CD4-positive, alpha-beta T cell (primary cell): ENCODE measurements at regions of chr13 and their contacts with region 1.

Region 1: GRCh38 chr13:41263261-41264027 is at the start of gene MTRF1:
- DNase-seq: peak; percentile 62 to 91 (median 76)
- ATAC-seq: peak; percentile 92
- H3K4me3 ChIP-seq: peak within 1 kb of the TSS; percentile 68
- H3K4me3 Mint-ChIP-seq: peak within 1 kb of the TSS; percentile 99
- H3K27ac ChIP-seq: peak within 1 kb of the TSS; percentile 77 to 78
- H3K27ac Mint-ChIP-seq: peak within 1 kb of the TSS; percentile 96
- H3K4me1 ChIP-seq: peaks cover 13% of the 10 kb centered on the region
- H3K4me1 Mint-ChIP-seq: peaks cover 35% of the 10 kb centered on the region
- H3K27me3 ChIP-seq: no peaks in the 10 kb centered on the region
- H3K27me3 Mint-ChIP-seq: no peaks in the 10 kb centered on the region
- CTCF ChIP-seq: no peak
- total RNA-seq, gene MTRF1: 15.7 to 17.8 TPM

Region 2: DNA sequence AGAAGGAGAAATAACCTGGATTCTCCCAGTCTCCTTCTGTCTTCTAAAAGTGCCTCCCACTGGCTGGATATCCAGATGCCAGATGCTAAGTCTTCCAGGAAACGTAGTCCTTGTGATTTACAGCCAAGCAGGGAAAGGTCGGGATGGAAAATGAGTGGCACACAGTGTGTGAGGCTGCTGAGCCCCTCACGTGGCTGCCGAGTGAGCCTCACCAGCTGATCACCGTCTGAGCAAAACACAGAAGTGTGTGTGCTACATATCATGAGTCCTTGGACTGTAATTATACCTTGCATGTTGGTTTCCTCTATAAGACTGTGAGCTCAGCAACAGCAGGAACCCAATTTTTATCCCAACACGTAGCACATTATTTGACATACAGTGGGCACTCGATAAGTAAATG is 1675.5 kb before region 1 on chr13:
- CTCF ChIA-PET with region 1: no interaction called
- POLR2A ChIA-PET with region 1: no interaction called
- intact Hi-C with region 1: no loop called
- DNase-seq: no peak
- ATAC-seq: no peak
- H3K4me3 ChIP-seq: no peak overlapping the region
- H3K4me3 Mint-ChIP-seq: no peak overlapping the region
- H3K27ac ChIP-seq: no peak overlapping the region
- H3K27ac Mint-ChIP-seq: no peak overlapping the region
- H3K4me1 ChIP-seq: no peaks in the 10 kb centered on the region
- H3K4me1 Mint-ChIP-seq: no peaks in the 10 kb centered on the region
- H3K27me3 ChIP-seq: peaks cover 0 to 4% of the 10 kb centered on the region in 2 experiments
- H3K27me3 Mint-ChIP-seq: peaks cover 24% of the 10 kb centered on the region
- CTCF ChIP-seq: no peak

Region 3: DNA sequence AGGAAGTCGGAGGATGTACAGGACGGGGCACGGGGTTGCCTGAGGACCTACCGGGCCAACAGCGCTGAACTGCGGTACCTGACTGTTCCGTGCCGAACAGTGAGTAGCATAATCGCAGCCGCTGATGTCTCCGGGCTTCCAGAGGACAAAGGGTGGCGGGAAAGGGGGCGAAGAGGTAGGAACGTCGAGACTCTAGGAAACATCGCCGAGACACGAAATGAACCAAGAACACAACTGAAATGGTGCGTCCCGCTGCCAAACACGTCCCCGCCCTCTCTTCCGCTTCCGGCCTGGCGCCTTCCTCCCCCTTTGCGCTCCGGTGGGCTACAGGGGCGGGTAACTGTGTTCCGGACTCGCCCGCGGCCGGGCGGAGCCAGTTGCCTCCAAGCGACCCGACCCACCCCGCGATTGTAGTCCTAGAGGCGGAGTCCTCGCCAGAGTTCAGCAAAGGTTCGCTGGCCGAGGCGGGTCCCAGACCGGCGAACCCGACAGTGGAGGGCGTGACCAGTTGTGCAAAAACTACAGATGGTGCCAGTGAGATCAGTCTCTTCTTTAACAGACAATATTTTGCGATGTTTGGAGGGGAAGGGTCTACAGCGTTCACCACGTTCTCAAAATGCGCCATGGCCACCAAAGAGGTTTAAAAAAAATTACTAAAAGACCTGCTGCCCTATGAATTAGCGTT is 492.4 kb before region 1 on chr13 and contains the start of gene MRPS31:
- CTCF ChIA-PET with region 1: no interaction called
- POLR2A ChIA-PET with region 1: no interaction called
- intact Hi-C with region 1: loop called in 1 of 2 experiments (anchors 10 kb)
- DNase-seq: peak; percentile 87 to 96 (median 94)
- ATAC-seq: peak; percentile 92
- H3K4me3 ChIP-seq: peak within 1 kb of the TSS; percentile 90
- H3K4me3 Mint-ChIP-seq: peak within 1 kb of the TSS; percentile 98
- H3K27ac ChIP-seq: peak within 1 kb of the TSS; percentile 75 to 81
- H3K27ac Mint-ChIP-seq: peak within 1 kb of the TSS; percentile 95
- H3K4me1 ChIP-seq: peaks cover 26% of the 10 kb centered on the region
- H3K4me1 Mint-ChIP-seq: peaks cover 29% of the 10 kb centered on the region
- H3K27me3 ChIP-seq: no peaks in the 10 kb centered on the region
- H3K27me3 Mint-ChIP-seq: no peaks in the 10 kb centered on the region
- CTCF ChIP-seq: peak; percentile 16
- total RNA-seq, gene MRPS31: 8.3 to 9.5 TPM

Region 4: GRCh38 chr13:41132512-41133152 is 130.8 kb before region 1 on chr13 and contains the start of gene KBTBD6:
- CTCF ChIA-PET with region 1: no interaction called
- POLR2A ChIA-PET with region 1: no interaction called
- intact Hi-C with region 1: loop called in 1 of 2 experiments (anchors 1 kb)
- DNase-seq: peak; percentile 81 to 96 (median 88)
- ATAC-seq: peak; percentile 96
- H3K4me3 ChIP-seq: peak within 1 kb of the TSS; percentile 91
- H3K4me3 Mint-ChIP-seq: peak within 1 kb of the TSS; percentile 96
- H3K27ac ChIP-seq: peak within 1 kb of the TSS; percentile 50 to 68
- H3K27ac Mint-ChIP-seq: peak within 1 kb of the TSS; percentile 86
- H3K4me1 ChIP-seq: peaks cover 37% of the 10 kb centered on the region
- H3K4me1 Mint-ChIP-seq: peaks cover 54% of the 10 kb centered on the region
- H3K27me3 ChIP-seq: no peaks in the 10 kb centered on the region
- H3K27me3 Mint-ChIP-seq: no peaks in the 10 kb centered on the region
- CTCF ChIP-seq: no peak
- total RNA-seq, gene KBTBD6: 6.8 to 7.2 TPM

Region 5: GRCh38 chr13:41310963-41311606 is 47.6 kb after region 1 on chr13 and contains the start of gene NAA16:
- CTCF ChIA-PET with region 1: no interaction called
- POLR2A ChIA-PET with region 1: interaction called, 7 read pairs
- intact Hi-C with region 1: loop called (anchors 1 kb)
- DNase-seq: peak; percentile 89 to 97 (median 94)
- ATAC-seq: peak; percentile 85
- H3K4me3 ChIP-seq: peak within 1 kb of the TSS; percentile 90
- H3K4me3 Mint-ChIP-seq: peak within 1 kb of the TSS; percentile 97
- H3K27ac ChIP-seq: peak within 1 kb of the TSS; percentile 55 to 85
- H3K27ac Mint-ChIP-seq: peak within 1 kb of the TSS; percentile 98
- H3K4me1 ChIP-seq: peaks cover 35% of the 10 kb centered on the region
- H3K4me1 Mint-ChIP-seq: peaks cover 56% of the 10 kb centered on the region
- H3K27me3 ChIP-seq: no peaks in the 10 kb centered on the region
- H3K27me3 Mint-ChIP-seq: no peaks in the 10 kb centered on the region
- CTCF ChIP-seq: no peak
- total RNA-seq, gene NAA16: 76.9 to 80.5 TPM

Region 6: DNA sequence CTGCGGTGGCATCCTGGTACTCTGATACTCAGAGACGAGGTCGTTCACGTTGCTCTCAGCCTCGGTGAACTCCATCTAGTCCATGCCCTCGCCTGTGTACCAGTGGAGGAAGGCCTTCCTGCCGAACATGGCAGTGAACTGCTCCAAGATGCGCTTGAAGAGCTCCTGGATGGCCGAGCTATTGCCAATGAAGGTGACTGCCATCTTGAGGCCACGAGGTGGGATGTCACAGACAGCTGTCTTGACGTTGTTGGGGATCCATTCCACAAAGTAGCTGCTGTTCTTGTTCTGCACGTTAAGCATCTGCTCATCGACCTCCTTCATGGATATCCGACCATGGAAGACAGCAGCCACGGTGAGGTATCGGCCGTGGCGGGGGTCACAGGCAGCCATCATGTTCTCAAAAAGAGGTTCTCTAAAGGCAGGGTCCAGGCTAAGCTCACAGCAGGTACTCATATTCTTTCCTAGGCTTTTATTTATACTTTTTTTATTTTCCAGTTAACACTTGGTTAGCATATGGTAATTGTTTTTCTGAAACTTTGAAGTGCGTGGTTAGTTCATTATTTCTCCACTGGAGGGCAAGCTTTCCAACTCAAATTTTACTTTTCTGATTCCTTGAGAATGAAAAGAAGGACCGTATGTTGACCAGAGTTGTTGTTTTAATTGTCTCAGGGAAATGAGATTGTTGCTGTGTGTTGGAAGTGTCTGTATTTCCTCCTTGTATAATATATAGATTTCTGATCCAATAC is 121.5 kb after region 1 on chr13:
- CTCF ChIA-PET with region 1: no interaction called
- POLR2A ChIA-PET with region 1: no interaction called
- intact Hi-C with region 1: no loop called
- DNase-seq: peak in 3 of 14 experiments; percentile 17 to 25 (median 23)
- ATAC-seq: no peak
- H3K4me3 ChIP-seq: no peak overlapping the region
- H3K4me3 Mint-ChIP-seq: no peak overlapping the region
- H3K27ac ChIP-seq: no peak overlapping the region
- H3K27ac Mint-ChIP-seq: no peak overlapping the region
- H3K4me1 ChIP-seq: peaks cover 5% of the 10 kb centered on the region
- H3K4me1 Mint-ChIP-seq: peaks cover 51% of the 10 kb centered on the region
- H3K27me3 ChIP-seq: no peaks in the 10 kb centered on the region
- H3K27me3 Mint-ChIP-seq: no peaks in the 10 kb centered on the region
- CTCF ChIP-seq: peak; percentile 45

Region 7: DNA sequence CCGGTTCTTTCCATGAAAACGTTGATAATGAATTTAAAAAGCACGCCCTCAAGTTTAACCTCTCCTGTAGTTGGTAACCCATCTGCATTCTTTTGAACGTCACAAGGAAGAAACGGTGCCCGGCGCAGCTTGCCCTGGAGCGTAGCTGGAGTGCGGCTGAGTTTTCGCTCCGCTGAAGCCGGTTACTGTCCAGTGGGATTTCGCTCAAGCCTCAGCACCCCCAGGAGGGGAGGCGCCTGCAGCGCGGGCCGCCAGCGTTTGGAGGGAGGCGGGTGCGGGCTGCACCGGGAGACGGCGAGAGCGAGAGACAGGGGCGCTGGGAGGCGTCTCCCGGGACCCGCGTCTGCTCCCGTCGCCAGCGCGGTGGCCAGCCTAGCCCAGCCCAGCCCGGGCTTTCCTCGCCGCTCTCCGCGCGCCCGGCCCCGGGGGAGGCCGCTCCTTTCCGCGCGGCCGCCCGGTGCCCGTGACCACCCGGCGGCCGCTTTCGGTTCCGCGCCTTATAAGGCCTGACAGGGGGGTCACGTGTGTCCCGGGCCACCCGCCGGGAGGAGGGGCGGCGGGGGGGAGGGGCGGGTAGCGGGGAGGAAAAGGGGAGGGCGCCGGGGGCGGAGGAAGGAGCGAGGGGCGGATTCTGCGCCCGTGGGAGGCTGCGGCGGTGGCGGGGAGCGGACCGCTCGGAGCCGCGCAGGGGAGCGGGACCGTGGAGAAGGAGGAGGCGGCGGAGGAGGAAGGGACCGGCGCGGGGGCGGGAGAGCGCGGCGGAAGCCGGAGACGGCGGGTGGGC is 776.7 kb after region 1 on chr13:
- CTCF ChIA-PET with region 1: no interaction called
- POLR2A ChIA-PET with region 1: no interaction called
- intact Hi-C with region 1: loop called in 1 of 2 experiments (anchors 5 kb)
- DNase-seq: peak; percentile 75 to 96 (median 88)
- ATAC-seq: peak; percentile 82
- H3K4me3 ChIP-seq: peak overlapping the region; percentile 83
- H3K4me3 Mint-ChIP-seq: peak overlapping the region; percentile 87
- H3K27ac ChIP-seq: peak overlapping the region; percentile 53 to 68
- H3K27ac Mint-ChIP-seq: peak overlapping the region; percentile 85
- H3K4me1 ChIP-seq: peaks cover 20% of the 10 kb centered on the region
- H3K4me1 Mint-ChIP-seq: peaks cover 19% of the 10 kb centered on the region
- H3K27me3 ChIP-seq: no peaks in the 10 kb centered on the region
- H3K27me3 Mint-ChIP-seq: no peaks in the 10 kb centered on the region
- CTCF ChIP-seq: no peak